Astrocyte of the cerebellum (primary cell): ENCODE measurements at regions of chr6 and their contacts with region 1.

Region 1: GRCh38 chr6:21593412-21593926 is at the start of gene SOX4:
- DNase-seq: peak; percentile 97
- H3K4me3 ChIP-seq: peak within 1 kb of the TSS; percentile 87
- CTCF ChIP-seq: no peak

Region 2: GRCh38 chr6:23446394-23447046 is 1853.1 kb after region 1 on chr6:
- in situ Hi-C with region 1: loop called (anchors 10 kb)
- DNase-seq: peak; percentile 55
- H3K4me3 ChIP-seq: no peak overlapping the region
- CTCF ChIP-seq: peak; percentile 71